ENCODE measurements at regions of chr4 and their contacts with region 1.

Region 1: DNA sequence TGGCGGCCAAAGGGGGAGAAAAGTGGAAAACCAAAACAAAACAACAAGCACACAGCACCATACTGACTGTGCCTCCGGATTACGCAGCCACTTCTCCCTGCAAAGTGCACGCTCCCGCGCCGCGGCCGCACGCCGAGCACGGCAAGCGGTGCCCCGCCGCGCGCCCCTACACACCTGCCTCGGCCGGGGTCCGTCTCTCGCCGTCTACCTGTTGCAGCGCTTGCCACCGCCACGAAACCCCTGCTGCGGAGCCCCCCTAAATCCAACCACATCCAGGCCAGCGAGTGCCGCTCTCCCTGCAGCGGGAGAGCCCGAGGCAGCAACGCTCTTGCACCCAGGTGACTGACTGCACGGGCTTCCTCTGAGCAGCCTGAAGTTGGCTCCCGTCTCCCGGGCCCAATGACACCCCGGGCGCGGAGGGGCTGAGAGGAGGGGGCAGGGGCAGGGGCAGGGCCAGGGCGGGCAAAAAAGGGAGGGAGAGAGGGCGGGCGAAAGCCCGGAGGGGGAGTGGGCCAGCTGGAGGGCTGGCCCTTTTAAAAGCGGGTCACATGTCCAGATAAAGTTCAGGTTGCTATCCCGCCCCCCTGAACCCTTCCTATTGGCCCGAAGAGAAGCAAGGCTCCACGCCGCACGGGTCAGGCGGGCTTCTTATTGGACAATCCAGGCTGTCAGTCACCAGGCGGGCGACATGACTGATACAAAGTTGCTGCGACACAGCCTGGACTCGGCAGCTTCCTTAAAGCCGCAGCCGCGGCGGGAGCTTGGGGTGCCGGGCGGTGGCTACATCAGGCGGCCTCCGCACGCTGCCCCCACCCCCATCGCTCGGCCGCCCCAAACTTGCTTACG is at the start of gene NR3C2:
- DNase-seq: peak; percentile 94
- H3K4me3 Mint-ChIP-seq: peak within 1 kb of the TSS; percentile 96
- H3K27ac Mint-ChIP-seq: peak within 1 kb of the TSS; percentile 48
- H3K4me1 Mint-ChIP-seq: peaks cover 23% of the 10 kb centered on the region
- H3K27me3 Mint-ChIP-seq: peaks cover 41% of the 10 kb centered on the region
- total RNA-seq, gene NR3C2: 0.24 and 0.29 TPM in 2 replicates

Region 2: DNA sequence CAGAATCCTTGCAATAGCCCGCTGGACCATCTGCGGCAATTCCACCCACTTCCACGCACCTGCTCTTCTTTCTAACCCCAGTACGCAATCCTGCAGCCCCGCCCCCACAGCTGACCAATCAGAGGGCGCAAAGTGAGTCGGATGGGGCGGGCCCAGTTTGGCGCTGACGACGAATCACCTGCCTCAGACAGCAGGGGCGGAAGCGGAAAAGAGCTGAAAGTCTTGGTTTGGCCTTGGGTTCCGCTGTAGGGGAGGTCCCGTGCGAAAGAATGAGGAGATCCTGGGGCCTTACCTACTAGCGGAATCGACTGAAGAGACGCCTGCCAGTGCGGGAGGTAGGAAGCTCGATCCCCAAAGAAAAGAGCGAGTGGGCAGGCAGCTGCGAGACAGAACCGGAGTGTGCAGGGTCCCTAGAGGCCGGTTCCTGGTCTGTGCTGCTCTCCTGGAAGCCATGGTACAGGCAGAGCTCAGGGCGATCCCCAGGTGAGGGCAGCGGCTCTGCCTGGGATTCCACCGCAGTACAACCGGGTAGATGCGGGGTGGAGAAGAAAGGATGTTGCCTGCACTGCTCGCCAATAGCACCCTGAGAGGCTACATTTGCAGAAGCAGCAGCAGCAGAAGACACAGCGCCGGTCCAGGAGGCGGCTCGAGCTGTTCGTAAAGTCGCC is 824.9 kb before region 1 on chr4 and contains the start of gene TMEM184C:
- intact Hi-C with region 1: loop called (anchors 2 kb)
- DNase-seq: peak; percentile 97
- H3K4me3 Mint-ChIP-seq: peak within 1 kb of the TSS; percentile 92
- H3K27ac Mint-ChIP-seq: peak within 1 kb of the TSS; percentile 89
- H3K4me1 Mint-ChIP-seq: peaks cover 26% of the 10 kb centered on the region
- H3K27me3 Mint-ChIP-seq: peaks cover 7% of the 10 kb centered on the region
- total RNA-seq, gene TMEM184C: 21.6 and 22.7 TPM in 2 replicates

Region 3: GRCh38 chr4:147793569-147794313 is 648.5 kb before region 1 on chr4:
- intact Hi-C with region 1: loop called (anchors 5 kb)
- DNase-seq: no peak
- H3K4me3 Mint-ChIP-seq: peak overlapping the region; percentile 61
- H3K27ac Mint-ChIP-seq: peak overlapping the region; percentile 80
- H3K4me1 Mint-ChIP-seq: peaks cover 58% of the 10 kb centered on the region
- H3K27me3 Mint-ChIP-seq: peaks cover 2% of the 10 kb centered on the region

Region 4: GRCh38 chr4:147943159-147943638 is 499.0 kb before region 1 on chr4:
- intact Hi-C with region 1: loop called (anchors 5 kb)
- DNase-seq: no peak
- H3K4me3 Mint-ChIP-seq: peak overlapping the region; percentile 17
- H3K27ac Mint-ChIP-seq: peak overlapping the region; percentile 36
- H3K4me1 Mint-ChIP-seq: peaks cover 37% of the 10 kb centered on the region
- H3K27me3 Mint-ChIP-seq: peaks cover 6% of the 10 kb centered on the region

Region 5: GRCh38 chr4:148056869-148057268 is 385.3 kb before region 1 on chr4:
- intact Hi-C with region 1: loop called (anchors 5 kb)
- DNase-seq: peak; percentile 34
- H3K4me3 Mint-ChIP-seq: no peak overlapping the region
- H3K27ac Mint-ChIP-seq: no peak overlapping the region
- H3K4me1 Mint-ChIP-seq: peaks cover 91% of the 10 kb centered on the region
- H3K27me3 Mint-ChIP-seq: no peaks in the 10 kb centered on the region